H1 (cell line): ENCODE measurements at regions of chr4 and their contacts with region 1.

Region 1: DNA sequence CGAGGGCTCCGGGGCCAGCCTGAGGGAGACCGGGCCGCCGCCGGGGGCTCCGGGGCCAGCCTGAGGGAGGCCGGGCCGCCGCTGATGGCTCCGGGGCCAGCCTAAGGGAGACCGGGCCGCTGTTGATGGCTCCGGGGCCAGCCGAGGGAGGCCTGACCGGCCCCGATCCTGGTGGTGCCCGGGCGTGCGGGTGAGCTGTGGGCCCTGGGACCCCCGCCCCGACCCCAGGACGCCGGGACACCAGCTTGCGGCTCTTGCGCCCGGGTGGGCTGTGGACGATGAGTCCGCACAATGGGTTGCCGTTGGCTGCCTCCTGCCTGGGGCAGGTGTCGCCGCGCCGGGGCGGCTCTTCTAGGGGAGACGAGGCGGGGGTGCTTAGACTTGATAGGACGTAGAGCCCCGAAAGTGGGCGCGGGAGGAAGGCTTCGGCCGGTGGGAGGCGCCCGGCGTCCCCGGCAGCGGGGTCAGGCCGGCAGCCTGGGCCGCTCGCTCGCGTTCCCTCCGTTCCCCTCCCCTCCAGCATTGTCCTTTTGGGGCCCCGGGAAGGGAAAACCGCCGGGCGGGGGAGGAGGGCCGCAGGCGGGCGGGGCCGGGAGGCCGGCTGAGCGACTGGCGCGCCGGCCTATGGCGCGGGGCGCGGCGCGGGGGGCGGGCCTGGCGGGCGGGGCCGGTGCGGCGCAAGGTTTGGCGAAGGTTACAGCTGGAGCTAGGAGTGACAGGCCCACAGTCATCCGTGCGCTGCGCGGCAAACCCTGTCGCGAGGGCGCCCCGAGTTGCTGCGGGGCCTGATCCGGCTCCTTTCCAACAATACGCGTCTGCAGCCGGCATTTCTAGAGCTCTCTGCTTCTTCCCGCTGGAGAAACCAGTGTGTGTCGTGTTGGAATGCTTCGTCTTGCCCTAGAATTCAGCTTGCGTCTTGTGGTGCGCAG is 790 bp downstream of the KIAA0232 start:
- DNase-seq: peak; percentile 23 to 90
- H3K4me3 ChIP-seq: peak overlapping the region; percentile 71 to 98 (median 88)
- H3K27ac ChIP-seq: peak overlapping the region; percentile 84
- H3K4me1 ChIP-seq: peaks cover 4 to 18% (median 12%) of the 10 kb centered on the region in 4 experiments; a peak in 6 of 7 replicates
- H3K27me3 ChIP-seq: peaks cover 0 to 9% (median 0%) of the 10 kb centered on the region in 4 experiments; a peak in 2 of 7 replicates
- CTCF ChIP-seq: no peak
- EP300 ChIP-seq: no peak
- POLR2A ChIP-seq: peak in 1 of 2 experiments; percentile 77; a peak in 2 of 3 replicates
- RAD21 ChIP-seq: peak; percentile 19 to 26; a peak in 3 of 4 replicates

Region 2: GRCh38 chr4:6768539-6768905 is 14.8 kb before region 1 on chr4:
- CTCF ChIA-PET with region 1: interaction called, 10 read pairs
- POLR2A ChIA-PET with region 1: interaction called, 7 read pairs
- DNase-seq: no peak
- H3K4me3 ChIP-seq: no peak overlapping the region
- H3K27ac ChIP-seq: no peak overlapping the region
- H3K4me1 ChIP-seq: peaks cover 0 to 3% (median 1%) of the 10 kb centered on the region in 4 experiments; a peak in 1 of 7 replicates
- H3K27me3 ChIP-seq: no peaks in the 10 kb centered on the region
- CTCF ChIP-seq: no peak
- EP300 ChIP-seq: no peak
- POLR2A ChIP-seq: no peak
- RAD21 ChIP-seq: no peak

Region 3: GRCh38 chr4:6794189-6794588 is 10.9 kb after region 1 on chr4:
- CTCF ChIA-PET with region 1: interaction called, 17 read pairs
- POLR2A ChIA-PET with region 1: interaction called, 7 read pairs
- DNase-seq: no peak
- H3K4me3 ChIP-seq: no peak overlapping the region
- H3K27ac ChIP-seq: no peak overlapping the region
- H3K4me1 ChIP-seq: no peaks in the 10 kb centered on the region
- H3K27me3 ChIP-seq: no peaks in the 10 kb centered on the region
- CTCF ChIP-seq: no peak
- EP300 ChIP-seq: no peak
- POLR2A ChIP-seq: no peak
- RAD21 ChIP-seq: no peak

Region 4: GRCh38 chr4:6953751-6954380 is 170.5 kb after region 1 on chr4:
- CTCF ChIA-PET with region 1: no interaction called
- POLR2A ChIA-PET with region 1: no interaction called
- DNase-seq: peak in 1 of 2 experiments; percentile 86
- H3K4me3 ChIP-seq: 0 out of 8 replicates have a peak overlapping the region, but pooled peaks of 1 of the 4 experiments have one; percentile 3
- H3K27ac ChIP-seq: no peak overlapping the region
- H3K4me1 ChIP-seq: peaks cover 0 to 20% (median 12%) of the 10 kb centered on the region in 4 experiments; a peak in 6 of 7 replicates
- H3K27me3 ChIP-seq: no peaks in the 10 kb centered on the region
- CTCF ChIP-seq: no peak
- EP300 ChIP-seq: no peak
- POLR2A ChIP-seq: no peak
- RAD21 ChIP-seq: no peak